AG04449 (cell line): ENCODE measurements at regions of chr1 and their contacts with region 1.

Region 1: DNA sequence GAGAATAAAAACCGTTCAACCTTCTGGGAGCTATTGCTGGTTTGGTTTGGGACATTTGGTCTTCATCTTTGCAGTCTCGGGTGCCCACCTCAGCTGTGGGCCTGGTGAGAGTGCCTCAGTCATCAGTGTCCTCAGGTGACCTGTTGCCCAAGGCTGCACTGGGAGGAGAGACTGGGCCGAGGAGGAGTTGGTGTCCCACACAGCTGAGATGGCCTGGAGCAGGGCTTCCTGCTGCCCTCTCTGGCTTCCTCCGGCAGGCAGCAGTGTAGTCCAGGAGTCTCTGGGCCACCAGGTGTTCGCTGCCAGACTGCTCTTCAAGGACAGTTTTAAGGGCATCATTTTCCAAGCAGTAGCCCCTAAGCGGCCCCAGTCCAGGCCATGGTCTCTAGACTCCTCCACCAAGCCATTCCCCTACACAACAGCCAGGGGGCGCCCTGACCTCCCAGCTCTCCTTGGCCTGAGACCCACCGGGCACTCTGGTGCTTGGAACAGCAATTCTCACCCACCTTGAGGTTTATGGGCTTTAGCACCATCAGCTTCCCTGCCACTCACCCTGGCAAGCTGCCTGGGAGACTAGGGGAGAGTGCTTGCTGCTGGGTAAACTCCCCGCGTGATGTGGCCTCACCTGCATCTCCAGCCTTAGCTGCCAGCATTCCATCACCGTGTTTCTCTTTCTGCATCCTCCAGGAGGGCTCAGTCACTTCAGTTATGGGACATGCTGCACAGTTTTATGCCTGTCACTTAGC is 9.1 kb upstream of the SYTL1 start:
- DNase-seq: no peak
- H3K4me3 ChIP-seq: no peak overlapping the region
- CTCF ChIP-seq: peak; percentile 85

Region 2: GRCh38 chr1:27306892-27307761 is 25.6 kb before region 1 on chr1:
- CTCF ChIA-PET with region 1: interaction called, 84 read pairs
- POLR2A ChIA-PET with region 1: no interaction called
- DNase-seq: no peak
- H3K4me3 ChIP-seq: no peak overlapping the region
- CTCF ChIP-seq: peak; percentile 19

Region 3: DNA sequence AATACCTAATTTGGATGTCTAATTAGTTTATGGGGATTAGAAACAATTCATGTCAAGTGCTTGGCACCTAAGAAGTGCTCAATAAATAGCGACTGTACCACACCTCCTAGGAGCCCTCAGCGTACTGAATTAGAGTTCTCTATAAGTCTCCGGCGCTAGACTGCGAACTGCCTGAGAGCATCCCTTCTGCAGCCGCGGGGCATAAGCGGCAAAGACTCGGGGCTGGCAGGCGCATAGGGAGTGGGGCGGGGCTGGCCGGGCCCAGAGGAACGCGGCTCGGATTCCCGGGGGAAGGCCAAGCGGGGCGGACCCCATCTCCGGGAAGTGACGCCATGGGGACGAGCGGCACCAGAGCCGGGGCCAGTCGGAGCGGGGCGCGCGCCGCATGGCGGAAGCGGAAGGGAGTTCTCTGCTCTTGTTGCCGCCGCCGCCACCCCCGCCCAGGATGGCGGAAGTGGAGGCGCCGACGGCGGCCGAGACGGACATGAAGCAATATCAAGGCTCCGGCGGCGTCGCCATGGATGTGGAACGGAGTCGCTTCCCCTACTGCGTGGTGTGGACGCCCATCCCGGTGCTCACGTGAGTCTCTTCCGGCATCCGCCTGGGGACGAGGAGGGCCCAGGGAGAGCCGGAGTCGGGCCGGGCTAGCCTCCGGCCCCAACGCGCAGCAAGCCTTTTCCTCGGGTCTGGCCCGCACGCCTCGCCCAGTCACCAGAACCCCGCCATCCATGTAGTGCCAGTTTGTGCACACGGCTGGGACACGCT is 10.7 kb before region 1 on chr1 and contains the start of gene TMEM222:
- CTCF ChIA-PET with region 1: interaction called, 73 read pairs
- POLR2A ChIA-PET with region 1: interaction called, 3 read pairs
- DNase-seq: peak; percentile 71
- H3K4me3 ChIP-seq: peak within 1 kb of the TSS; percentile 100
- CTCF ChIP-seq: peak; percentile 14

Region 4: GRCh38 chr1:27349784-27350662 is 17.3 kb after region 1 on chr1:
- CTCF ChIA-PET with region 1: interaction called, 89 read pairs
- POLR2A ChIA-PET with region 1: interaction called, 6 read pairs
- DNase-seq: no peak
- H3K4me3 ChIP-seq: peak overlapping the region; percentile 49
- CTCF ChIP-seq: no peak

Region 5: DNA sequence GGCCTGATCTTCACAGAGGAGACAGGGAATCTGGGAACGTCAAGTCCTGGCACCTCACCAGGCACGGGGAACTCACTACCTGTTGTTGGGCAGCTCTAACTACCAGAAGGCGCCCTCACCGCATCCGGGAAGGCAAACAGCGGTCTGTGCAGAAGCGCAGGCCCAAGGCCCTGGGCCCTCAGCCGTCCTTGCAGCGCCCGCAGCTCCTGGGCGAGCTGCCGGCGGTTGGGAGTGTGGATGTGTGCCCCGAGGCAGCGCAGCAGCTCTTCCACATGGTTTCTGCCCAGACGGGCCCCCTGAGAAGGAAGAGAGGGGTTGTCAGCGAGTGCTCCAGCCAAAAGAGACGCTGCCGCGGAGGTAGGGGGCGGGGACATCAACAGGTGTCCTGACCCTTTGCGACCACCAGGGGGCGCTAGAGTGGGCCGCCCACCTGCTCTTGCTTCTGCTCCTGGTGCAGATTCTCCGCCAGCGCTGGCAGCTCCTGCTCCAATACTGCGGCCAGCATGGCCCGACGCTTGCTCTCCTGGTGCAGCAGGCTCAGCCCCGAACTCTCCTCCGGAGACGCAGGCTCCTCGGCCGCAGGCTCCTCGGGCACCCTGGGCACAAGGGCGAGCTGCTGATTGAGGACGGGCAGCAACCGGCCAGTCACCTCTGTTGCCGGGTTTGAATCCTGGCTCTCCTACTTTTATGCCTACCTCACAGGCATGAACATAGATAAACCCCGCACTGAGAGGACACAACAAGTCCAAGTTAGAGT is 24.8 kb after region 1 on chr1:
- CTCF ChIA-PET with region 1: interaction called, 89 read pairs
- POLR2A ChIA-PET with region 1: no interaction called
- DNase-seq: no peak
- H3K4me3 ChIP-seq: no peak overlapping the region
- CTCF ChIP-seq: peak; percentile 92

Region 6: GRCh38 chr1:27365372-27366112 is 32.8 kb after region 1 on chr1:
- CTCF ChIA-PET with region 1: interaction called, 27 read pairs
- POLR2A ChIA-PET with region 1: no interaction called
- DNase-seq: peak; percentile 42
- H3K4me3 ChIP-seq: peak overlapping the region; percentile 63
- CTCF ChIP-seq: no peak

Region 7: DNA sequence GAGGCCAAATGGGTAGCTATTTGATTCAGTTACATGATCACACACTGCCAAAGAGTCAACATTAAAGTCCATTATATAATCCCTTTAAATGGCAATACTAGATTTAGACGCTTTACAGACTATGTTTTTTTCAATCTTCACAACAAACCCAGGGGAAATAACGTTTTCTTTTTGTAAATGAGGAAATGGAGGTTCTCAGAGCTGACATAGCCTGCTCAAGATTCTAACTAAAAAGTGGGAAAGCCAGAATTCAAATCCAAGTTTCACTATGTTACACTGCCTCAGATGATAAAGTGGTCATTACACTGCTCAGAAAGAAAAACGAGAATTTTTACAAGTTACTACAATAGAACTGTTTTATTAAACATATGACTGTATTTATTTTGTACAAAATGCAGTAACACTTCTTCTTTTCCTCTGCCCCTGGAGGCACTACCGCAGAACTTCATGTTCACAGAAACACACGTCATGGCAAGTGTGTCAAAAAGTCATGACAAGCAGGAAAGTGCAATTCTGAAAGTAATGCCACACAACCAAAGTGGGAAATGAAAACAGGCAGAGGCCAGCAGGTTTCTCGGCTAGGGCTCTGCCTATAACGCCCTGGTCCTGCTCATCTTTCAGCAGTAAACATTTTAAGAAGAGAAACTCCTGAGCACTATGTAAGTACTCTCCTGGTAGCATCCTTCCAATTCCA is 558.6 kb after region 1 on chr1:
- CTCF ChIA-PET with region 1: no interaction called
- POLR2A ChIA-PET with region 1: no interaction called
- DNase-seq: no peak
- H3K4me3 ChIP-seq: no peak overlapping the region
- CTCF ChIP-seq: no peak